ENCODE measurements at regions of chr13 and their contacts with region 1.

Region 1: DNA sequence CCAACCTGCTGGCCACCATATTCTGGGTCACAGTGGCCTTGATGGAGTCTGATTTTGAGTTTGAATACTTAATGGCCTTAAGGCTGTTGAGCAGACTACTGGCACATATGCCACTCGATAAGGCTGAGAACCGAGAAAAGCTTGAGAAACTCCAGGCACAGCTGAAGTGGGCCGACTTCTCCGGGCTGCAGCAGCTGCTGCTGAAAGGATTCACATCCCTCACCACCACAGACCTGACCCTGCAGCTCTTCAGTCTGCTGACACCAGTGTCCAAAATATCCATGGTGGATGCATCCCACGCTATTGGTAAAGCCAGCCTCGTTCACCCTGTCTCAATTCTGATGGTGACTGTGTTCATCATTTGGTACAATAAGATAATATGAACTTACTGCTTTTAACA is 77.5 kb downstream of the ZAR1L start:
- DNase-seq: no peak
- H3K4me3 ChIP-seq: no peak overlapping the region
- H3K27ac ChIP-seq: no peak overlapping the region
- H3K4me1 ChIP-seq: peaks cover 26% of the 10 kb centered on the region
- H3K27me3 ChIP-seq: no peaks in the 10 kb centered on the region
- CTCF ChIP-seq: no peak

Region 2: GRCh38 chr13:32216286-32216685 is 21.4 kb before region 1 on chr13:
- intact Hi-C with region 1: loop called (anchors 2 kb)
- DNase-seq: no peak
- H3K4me3 ChIP-seq: no peak overlapping the region
- H3K27ac ChIP-seq: no peak overlapping the region
- H3K4me1 ChIP-seq: peaks cover 14% of the 10 kb centered on the region
- H3K27me3 ChIP-seq: no peaks in the 10 kb centered on the region
- CTCF ChIP-seq: no peak

Region 3: GRCh38 chr13:32284927-32285632 is 47.4 kb after region 1 on chr13:
- intact Hi-C with region 1: no loop called
- DNase-seq: no peak
- H3K4me3 ChIP-seq: no peak overlapping the region
- H3K27ac ChIP-seq: peak overlapping the region; percentile 77
- H3K4me1 ChIP-seq: peaks cover 37% of the 10 kb centered on the region
- H3K27me3 ChIP-seq: no peaks in the 10 kb centered on the region
- CTCF ChIP-seq: no peak